PC-3 (cell line): ENCODE measurements at regions of chr10 and their contacts with region 1.

Region 1: GRCh38 chr10:124741281-124741921 is 2.8 kb downstream of the FAM53B start:
- DNase-seq: peak; percentile 71
- ATAC-seq: peak; percentile 47
- H3K4me3 ChIP-seq: peak overlapping the region; percentile 92
- H3K27ac ChIP-seq: peak overlapping the region; percentile 57; the same call in 1 of the 2 replicates
- H3K4me1 ChIP-seq: peaks cover 57% of the 10 kb centered on the region
- H3K27me3 ChIP-seq: no peaks in the 10 kb centered on the region
- CTCF ChIP-seq: peak; percentile 71

Region 2: GRCh38 chr10:123655751-123656150 is 1085.7 kb before region 1 on chr10:
- CTCF ChIA-PET with region 1: interaction called, 13 read pairs
- POLR2A ChIA-PET with region 1: no interaction called
- intact Hi-C with region 1: no loop called
- DNase-seq: no peak
- ATAC-seq: no peak
- H3K4me3 ChIP-seq: no peak overlapping the region
- H3K27ac ChIP-seq: no peak overlapping the region
- H3K4me1 ChIP-seq: no peaks in the 10 kb centered on the region
- H3K27me3 ChIP-seq: no peaks in the 10 kb centered on the region
- CTCF ChIP-seq: no peak

Region 3: DNA sequence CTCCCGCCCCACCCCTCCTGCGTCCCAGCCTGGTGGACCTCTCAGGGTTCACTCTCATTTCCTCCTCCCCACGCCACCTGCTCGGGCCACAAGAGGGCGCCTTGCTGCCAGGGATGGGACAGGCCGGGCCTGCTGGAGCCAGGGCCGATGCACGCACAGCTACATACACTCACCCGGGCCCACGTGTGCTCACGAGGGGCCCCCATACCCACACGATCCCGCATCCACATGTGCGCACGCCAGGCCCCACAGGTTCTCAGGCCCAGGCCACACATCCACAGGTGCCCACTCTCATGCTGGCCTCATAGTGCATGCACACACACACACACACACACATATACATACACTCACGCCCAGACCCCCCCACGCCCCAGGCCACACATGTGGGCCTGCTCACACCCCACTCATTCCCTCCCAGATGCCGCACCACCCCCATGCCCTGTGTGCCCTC is 211.2 kb before region 1 on chr10:
- CTCF ChIA-PET with region 1: interaction called, 16 read pairs
- POLR2A ChIA-PET with region 1: no interaction called
- intact Hi-C with region 1: loop called (anchors 1 kb)
- DNase-seq: peak; percentile 80
- ATAC-seq: peak; percentile 98
- H3K4me3 ChIP-seq: no peak overlapping the region
- H3K27ac ChIP-seq: no peak overlapping the region
- H3K4me1 ChIP-seq: no peaks in the 10 kb centered on the region
- H3K27me3 ChIP-seq: no peaks in the 10 kb centered on the region
- CTCF ChIP-seq: peak; percentile 80

Region 4: GRCh38 chr10:124539935-124540641 is 201.3 kb before region 1 on chr10:
- CTCF ChIA-PET with region 1: interaction called, 6 read pairs
- POLR2A ChIA-PET with region 1: no interaction called
- intact Hi-C with region 1: loop called (anchors 1 kb)
- DNase-seq: peak; percentile 24
- ATAC-seq: peak; percentile 82
- H3K4me3 ChIP-seq: no peak overlapping the region
- H3K27ac ChIP-seq: no peak overlapping the region
- H3K4me1 ChIP-seq: no peaks in the 10 kb centered on the region
- H3K27me3 ChIP-seq: no peaks in the 10 kb centered on the region
- CTCF ChIP-seq: peak; percentile 57

Region 5: DNA sequence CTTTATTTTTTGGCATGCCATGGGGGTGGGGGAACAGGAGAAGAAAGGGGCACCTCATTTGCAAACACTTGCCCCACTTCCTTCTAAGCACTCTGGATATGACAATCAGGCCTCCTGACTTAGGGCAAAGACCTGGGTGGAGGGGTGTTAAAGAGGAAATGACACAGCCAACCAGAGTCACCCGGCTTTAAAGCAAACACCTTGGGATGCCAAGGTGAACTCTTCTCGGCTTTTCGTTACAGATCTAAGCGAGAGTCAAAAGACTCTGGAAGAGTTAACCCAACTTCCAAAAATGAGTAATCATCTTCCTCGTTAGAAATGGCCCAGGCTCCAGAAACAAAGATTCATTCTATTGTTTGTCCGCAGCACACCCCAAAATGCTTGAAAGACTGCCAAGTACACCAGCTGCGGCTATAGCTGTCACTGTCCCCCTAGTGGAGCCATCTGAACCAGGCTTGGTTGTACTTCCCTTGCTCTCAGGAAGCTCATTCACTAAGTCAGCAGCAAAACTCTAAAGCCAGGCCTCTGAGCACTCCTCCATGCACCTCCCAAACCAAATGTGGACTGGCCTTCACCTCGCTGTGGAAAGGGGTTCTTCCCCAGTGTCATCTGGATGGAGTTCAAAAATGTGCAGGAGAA is 22.1 kb before region 1 on chr10:
- CTCF ChIA-PET with region 1: interaction called, 6 read pairs
- POLR2A ChIA-PET with region 1: no interaction called
- intact Hi-C with region 1: loop called (anchors 1 kb)
- DNase-seq: peak; percentile 89
- ATAC-seq: peak; percentile 88
- H3K4me3 ChIP-seq: peak overlapping the region; percentile 22; the same call in 1 of the 2 replicates
- H3K27ac ChIP-seq: peak overlapping the region; percentile 57
- H3K4me1 ChIP-seq: peaks cover 15% of the 10 kb centered on the region
- H3K27me3 ChIP-seq: no peaks in the 10 kb centered on the region
- CTCF ChIP-seq: peak; percentile 58